SK-N-SH (cell line): ENCODE measurements at regions of chr11 and their contacts with region 1.

Region 1: GRCh38 chr11:72024069-72024754 is 25.5 kb downstream of the IL18BP start:
- DNase-seq: no peak
- H3K4me3 ChIP-seq: no peak overlapping the region
- H3K27ac ChIP-seq: peak overlapping the region in 1 of 2 experiments; percentile 53; a peak in 2 of 4 replicates
- H3K4me1 ChIP-seq: peaks cover 11 to 16% of the 10 kb centered on the region in 2 experiments; a peak in 3 of 4 replicates
- H3K27me3 ChIP-seq: no peaks in the 10 kb centered on the region
- CTCF ChIP-seq: no peak
- EP300 ChIP-seq: peak in 1 of 2 experiments; percentile 77; a peak in 1 of 4 replicates
- RAD21 ChIP-seq: no peak

Region 2: DNA sequence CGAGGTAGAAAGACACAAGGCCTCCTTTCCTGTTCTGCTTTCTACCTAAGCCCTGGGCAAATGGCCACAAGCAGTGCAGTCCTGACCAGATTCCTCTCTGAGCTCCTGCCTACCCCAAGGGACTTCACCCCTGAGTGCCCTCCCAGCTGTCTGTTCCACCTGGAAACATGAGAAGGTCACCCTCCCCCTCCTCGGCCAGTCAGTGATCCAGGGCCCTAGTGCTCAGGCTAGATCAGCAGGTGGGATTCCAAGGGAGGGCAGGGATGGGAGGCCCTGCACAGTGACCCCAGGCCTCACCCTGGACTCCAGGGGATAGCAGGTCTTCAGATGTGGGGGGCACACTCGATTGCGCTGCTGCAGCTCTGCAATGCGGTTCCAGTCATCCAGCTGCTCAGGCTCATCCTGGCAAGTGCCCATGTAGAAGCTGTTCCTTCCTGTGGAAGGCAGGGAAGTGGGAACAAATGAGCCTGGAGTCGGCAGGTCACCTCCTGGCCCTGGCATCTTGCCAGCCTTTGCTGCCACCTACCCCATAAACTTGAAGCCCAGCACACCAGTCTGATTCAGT is 19.2 kb before region 1 on chr11:
- CTCF ChIA-PET with region 1: interaction called, 15 read pairs
- POLR2A ChIA-PET with region 1: interaction called, 7 read pairs
- DNase-seq: no peak
- H3K4me3 ChIP-seq: no peak overlapping the region
- H3K27ac ChIP-seq: peak overlapping the region in 1 of 2 experiments; percentile 50; a peak in 1 of 4 replicates
- H3K4me1 ChIP-seq: peaks cover 0 to under 1% of the 10 kb centered on the region in 2 experiments; a peak in 1 of 4 replicates
- H3K27me3 ChIP-seq: no peaks in the 10 kb centered on the region
- CTCF ChIP-seq: no peak
- EP300 ChIP-seq: no peak
- RAD21 ChIP-seq: no peak

Region 3: GRCh38 chr11:72040726-72041441 is 16.7 kb after region 1 on chr11:
- CTCF ChIA-PET with region 1: interaction called, 35 read pairs
- POLR2A ChIA-PET with region 1: interaction called, 21 read pairs
- DNase-seq: peak; percentile 75
- H3K4me3 ChIP-seq: peak overlapping the region; percentile 64 to 67
- H3K27ac ChIP-seq: peak overlapping the region; percentile 97 to 99
- H3K4me1 ChIP-seq: peaks cover 18 to 45% of the 10 kb centered on the region in 2 experiments
- H3K27me3 ChIP-seq: no peaks in the 10 kb centered on the region
- CTCF ChIP-seq: no peak
- EP300 ChIP-seq: no peak
- RAD21 ChIP-seq: no peak

Region 4: GRCh38 chr11:72069200-72069599 is 45.0 kb after region 1 on chr11:
- CTCF ChIA-PET with region 1: interaction called, 18 read pairs
- POLR2A ChIA-PET with region 1: no interaction called
- DNase-seq: no peak
- H3K4me3 ChIP-seq: peak overlapping the region in 1 of 2 experiments; percentile 43; a peak in 2 of 4 replicates
- H3K27ac ChIP-seq: peak overlapping the region; percentile 69 to 82
- H3K4me1 ChIP-seq: peaks cover 21 to 52% of the 10 kb centered on the region in 2 experiments
- H3K27me3 ChIP-seq: no peaks in the 10 kb centered on the region
- CTCF ChIP-seq: no peak
- EP300 ChIP-seq: no peak
- RAD21 ChIP-seq: no peak

Region 5: GRCh38 chr11:72075109-72075508 is 50.9 kb after region 1 on chr11:
- CTCF ChIA-PET with region 1: interaction called, 16 read pairs
- POLR2A ChIA-PET with region 1: no interaction called
- DNase-seq: no peak
- H3K4me3 ChIP-seq: no peak overlapping the region
- H3K27ac ChIP-seq: peak overlapping the region; percentile 4 to 12; a peak in 1 of 4 replicates
- H3K4me1 ChIP-seq: peaks cover 7 to 34% of the 10 kb centered on the region in 2 experiments
- H3K27me3 ChIP-seq: no peaks in the 10 kb centered on the region
- CTCF ChIP-seq: peak; percentile 30
- EP300 ChIP-seq: no peak
- RAD21 ChIP-seq: no peak

Region 6: GRCh38 chr11:72080256-72080974 is 56.2 kb after region 1 on chr11 and contains the starts of genes LRRC51 and NUMA1:
- CTCF ChIA-PET with region 1: interaction called, 99 read pairs
- POLR2A ChIA-PET with region 1: interaction called, 3 read pairs
- DNase-seq: peak; percentile 92
- H3K4me3 ChIP-seq: peak within 1 kb of the TSS; percentile 70 to 78
- H3K27ac ChIP-seq: peak within 1 kb of the TSS; percentile 88
- H3K4me1 ChIP-seq: peaks cover 8 to 19% of the 10 kb centered on the region in 2 experiments; a peak in 3 of 4 replicates
- H3K27me3 ChIP-seq: no peaks in the 10 kb centered on the region
- CTCF ChIP-seq: no peak
- EP300 ChIP-seq: no peak; a peak in 1 of 4 replicates
- RAD21 ChIP-seq: no peak
- polyA plus RNA-seq, gene LRRC51: 7.3 and 8.0 TPM in 2 replicates
- polyA plus RNA-seq, gene NUMA1: 111 TPM in 2 replicates

Region 7: DNA sequence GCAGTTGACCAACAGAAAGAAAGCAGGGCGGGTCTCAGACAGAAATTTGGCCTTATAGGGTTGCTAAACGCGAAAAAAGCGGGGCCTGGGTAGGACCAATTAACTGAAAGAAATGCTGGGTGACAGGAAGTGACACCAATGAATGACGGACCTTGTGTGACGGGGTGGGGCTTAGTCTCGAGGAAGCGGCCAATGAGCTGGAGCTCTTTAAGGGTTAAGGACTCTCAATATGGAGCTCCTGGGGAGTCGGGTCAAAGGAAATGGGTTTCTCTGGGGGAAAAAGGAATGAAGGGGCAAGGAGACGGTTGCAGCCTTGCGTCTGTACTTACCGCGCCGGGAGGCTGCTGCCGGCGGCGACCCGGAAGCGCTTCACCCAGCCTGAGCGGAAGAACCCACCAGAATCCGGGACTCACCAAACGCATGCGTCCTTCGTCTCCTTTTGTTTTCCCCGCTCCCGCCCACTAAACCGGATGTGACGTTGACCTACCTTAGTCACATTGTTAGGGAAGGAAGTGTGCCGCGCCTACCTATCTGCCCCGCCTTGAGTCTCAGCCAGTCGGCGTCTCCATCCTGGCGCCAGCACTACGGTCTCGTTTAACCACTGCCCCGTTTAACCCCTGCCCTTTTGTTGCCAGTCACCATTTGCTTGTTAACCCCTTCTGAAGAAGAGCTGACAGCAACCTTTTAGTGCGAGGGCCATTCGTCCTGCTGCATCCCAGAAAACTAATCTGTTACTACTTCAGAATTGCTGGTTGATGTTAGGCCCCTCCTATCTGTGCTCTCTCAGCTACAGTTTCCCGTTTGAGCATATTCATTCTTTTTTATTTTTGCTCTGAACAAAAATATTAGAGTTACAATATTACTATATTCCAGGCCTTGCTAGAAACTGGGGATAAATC is 88.4 kb after region 1 on chr11 and contains the start of gene ANAPC15:
- CTCF ChIA-PET with region 1: interaction called, 21 read pairs
- POLR2A ChIA-PET with region 1: no interaction called
- DNase-seq: peak; percentile 84
- H3K4me3 ChIP-seq: peak within 1 kb of the TSS; percentile 71 to 77
- H3K27ac ChIP-seq: peak within 1 kb of the TSS; percentile 96 to 99
- H3K4me1 ChIP-seq: peaks cover 6 to 16% of the 10 kb centered on the region in 2 experiments; a peak in 3 of 4 replicates
- H3K27me3 ChIP-seq: no peaks in the 10 kb centered on the region
- CTCF ChIP-seq: no peak
- EP300 ChIP-seq: peak in 1 of 2 experiments; percentile 23; a peak in 1 of 4 replicates
- RAD21 ChIP-seq: no peak; the same call in 1 of the 2 replicates
- polyA plus RNA-seq, gene ANAPC15: 85.6 and 92.3 TPM in 2 replicates